ENCODE measurements at regions of chr16 and their contacts with region 1.

Region 1: DNA sequence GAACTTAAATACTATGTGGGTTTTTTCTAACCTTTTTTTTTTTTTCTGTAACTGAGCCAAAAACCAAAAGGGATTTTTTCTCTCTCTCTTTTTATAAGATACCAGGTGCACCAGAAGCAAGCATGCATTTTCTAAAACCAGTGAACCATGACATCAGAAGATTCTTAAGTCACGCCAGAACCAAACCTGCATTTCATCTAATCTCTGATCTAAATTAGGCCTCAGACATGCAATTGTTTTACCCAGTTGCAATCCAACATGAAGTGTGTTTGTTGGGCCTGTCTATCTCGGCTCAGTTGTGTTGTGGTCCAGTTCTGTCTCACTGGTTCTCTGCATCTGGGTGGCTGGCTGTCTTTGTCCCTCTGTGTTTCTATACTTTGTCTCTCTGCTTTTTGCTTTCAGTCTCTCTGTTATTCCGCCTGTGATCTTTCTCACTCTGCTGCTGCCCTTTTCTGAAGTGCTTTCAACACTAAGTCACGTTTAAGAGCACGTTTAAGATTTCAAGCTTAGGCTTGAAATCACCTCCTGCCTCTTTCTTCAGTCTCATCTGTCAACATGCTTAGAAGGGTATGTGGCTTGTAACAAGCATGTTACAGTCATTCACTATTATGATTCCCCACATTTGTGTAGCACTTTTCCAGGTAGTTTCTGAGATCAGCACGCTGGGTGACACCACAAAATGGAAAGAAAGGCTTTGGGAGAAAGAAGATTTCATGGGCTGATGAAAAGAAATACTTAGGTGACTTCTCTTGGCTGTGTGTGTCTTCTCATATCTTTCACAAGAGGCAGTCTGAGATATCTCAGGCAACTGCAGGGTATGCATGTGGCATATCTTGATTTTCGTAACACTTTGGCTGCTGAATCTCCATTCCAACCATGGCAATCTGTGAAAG is 488.9 kb downstream of the SHISA9 start:
- DNase-seq: peak; percentile 99
- H3K4me3 ChIP-seq: peak overlapping the region; percentile 53
- H3K27ac ChIP-seq: peak overlapping the region; percentile 98
- H3K4me1 ChIP-seq: peaks cover 67% of the 10 kb centered on the region
- CTCF ChIP-seq: no peak

Region 2: GRCh38 chr16:12803203-12804097 is 586.9 kb before region 1 on chr16 and contains the start of gene CPPED1:
- CTCF ChIA-PET with region 1: no interaction called
- POLR2A ChIA-PET with region 1: no interaction called
- intact Hi-C with region 1: loop called (anchors 5 kb)
- DNase-seq: peak; percentile 95
- H3K4me3 ChIP-seq: peak within 1 kb of the TSS; percentile 86
- H3K27ac ChIP-seq: peak within 1 kb of the TSS; percentile 77
- H3K4me1 ChIP-seq: peaks cover 21% of the 10 kb centered on the region
- CTCF ChIP-seq: no peak
- total RNA-seq, gene CPPED1: 8.6 and 9.4 TPM in 2 replicates

Region 3: DNA sequence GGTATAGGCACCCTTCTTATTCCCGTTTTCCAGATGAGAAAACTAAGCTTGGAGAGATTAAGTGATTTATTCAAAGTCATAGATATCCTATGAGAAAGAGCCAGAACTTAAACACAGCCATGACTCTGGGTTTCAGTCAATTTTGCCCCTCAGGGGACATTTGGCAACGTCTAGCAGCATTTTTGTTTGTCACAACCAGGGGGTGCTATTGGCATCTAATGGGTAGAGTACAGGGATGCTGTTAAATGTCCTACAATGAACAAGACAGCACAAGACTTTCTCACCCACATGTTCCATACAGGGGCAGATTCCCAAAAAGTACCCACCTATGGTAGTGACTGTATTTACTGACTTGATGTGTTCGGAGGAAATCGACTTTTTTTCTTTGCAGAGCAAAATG is 493.8 kb before region 1 on chr16:
- CTCF ChIA-PET with region 1: no interaction called
- POLR2A ChIA-PET with region 1: no interaction called
- intact Hi-C with region 1: loop called (anchors 2 kb)
- DNase-seq: peak; percentile 69
- H3K4me3 ChIP-seq: no peak overlapping the region
- H3K27ac ChIP-seq: no peak overlapping the region
- H3K4me1 ChIP-seq: no peaks in the 10 kb centered on the region
- CTCF ChIP-seq: peak; percentile 89

Region 4: GRCh38 chr16:13322336-13322735 is 68.0 kb before region 1 on chr16:
- CTCF ChIA-PET with region 1: no interaction called
- POLR2A ChIA-PET with region 1: interaction called, 3 read pairs
- intact Hi-C with region 1: loop called (anchors 2 kb)
- DNase-seq: peak; percentile 66
- H3K4me3 ChIP-seq: no peak overlapping the region
- H3K27ac ChIP-seq: peak overlapping the region; percentile 68
- H3K4me1 ChIP-seq: peaks cover 27% of the 10 kb centered on the region
- CTCF ChIP-seq: no peak

Region 5: GRCh38 chr16:13376174-13376573 is 14.2 kb before region 1 on chr16:
- CTCF ChIA-PET with region 1: interaction called, 4 read pairs
- POLR2A ChIA-PET with region 1: interaction called, 11 read pairs
- intact Hi-C with region 1: no loop called
- DNase-seq: no peak
- H3K4me3 ChIP-seq: no peak overlapping the region
- H3K27ac ChIP-seq: no peak overlapping the region
- H3K4me1 ChIP-seq: peaks cover 12% of the 10 kb centered on the region
- CTCF ChIP-seq: no peak

Region 6: GRCh38 chr16:13426269-13426668 is 35.9 kb after region 1 on chr16:
- CTCF ChIA-PET with region 1: interaction called, 3 read pairs
- POLR2A ChIA-PET with region 1: interaction called, 3 read pairs
- intact Hi-C with region 1: loop called (anchors 5 kb)
- DNase-seq: peak; percentile 19
- H3K4me3 ChIP-seq: no peak overlapping the region
- H3K27ac ChIP-seq: no peak overlapping the region
- H3K4me1 ChIP-seq: peaks cover 46% of the 10 kb centered on the region
- CTCF ChIP-seq: peak; percentile 71

Region 7: DNA sequence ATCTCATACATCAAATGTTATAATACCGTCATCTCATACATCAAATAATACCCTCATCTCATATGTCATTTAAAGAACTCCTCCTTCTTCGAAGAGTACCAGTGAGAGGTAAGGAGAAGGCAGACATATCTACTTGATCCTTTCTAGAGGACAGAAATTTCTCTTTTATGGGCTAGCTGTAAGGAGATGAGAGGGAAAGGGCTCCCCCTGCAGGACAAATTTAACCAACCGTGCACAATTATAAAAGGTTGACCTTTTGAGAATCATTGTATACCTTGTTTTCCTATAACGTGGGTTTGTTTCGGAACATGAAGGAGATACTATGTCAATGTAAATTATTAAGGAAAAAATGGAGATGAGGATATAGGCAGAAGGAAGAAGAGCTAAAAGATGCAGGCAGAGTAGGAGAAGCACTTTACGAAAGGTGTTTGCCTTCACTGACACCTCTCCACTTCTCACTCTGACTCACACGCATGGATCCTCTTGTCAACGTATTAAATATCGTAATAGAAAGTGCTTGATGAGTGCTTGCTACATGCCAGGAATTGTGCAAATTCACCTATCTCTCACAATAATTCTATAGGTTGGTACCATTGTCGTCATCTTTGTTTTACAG is 63.7 kb after region 1 on chr16:
- CTCF ChIA-PET with region 1: no interaction called
- POLR2A ChIA-PET with region 1: interaction called, 4 read pairs
- intact Hi-C with region 1: loop called (anchors 2 kb)
- DNase-seq: peak; percentile 72
- H3K4me3 ChIP-seq: no peak overlapping the region
- H3K27ac ChIP-seq: no peak overlapping the region
- H3K4me1 ChIP-seq: peaks cover 14% of the 10 kb centered on the region
- CTCF ChIP-seq: peak; percentile 96

Measured in OCI-LY7 (cell line).